CD8-positive, alpha-beta T cell (primary cell): ENCODE measurements at regions of chr1 and their contacts with region 1.

Region 1: GRCh38 chr1:91924146-91924545 is 25.1 kb upstream of the BRDT start:
- DNase-seq: no peak
- ATAC-seq: no peak
- H3K4me3 ChIP-seq: no peak overlapping the region
- H3K4me3 Mint-ChIP-seq: no peak overlapping the region
- H3K27ac ChIP-seq: no peak overlapping the region
- H3K27ac Mint-ChIP-seq: no peak overlapping the region
- H3K4me1 ChIP-seq: no peaks in the 10 kb centered on the region
- H3K4me1 Mint-ChIP-seq: no peaks in the 10 kb centered on the region
- H3K27me3 ChIP-seq: no peaks in the 10 kb centered on the region
- H3K27me3 Mint-ChIP-seq: no peaks in the 10 kb centered on the region
- CTCF ChIP-seq: no peak

Region 2: GRCh38 chr1:91404151-91405012 is 519.8 kb before region 1 on chr1 and contains the start of gene HFM1:
- CTCF ChIA-PET with region 1: interaction called, 3 read pairs
- POLR2A ChIA-PET with region 1: no interaction called
- intact Hi-C with region 1: loop called (anchors 1 to 5 kb)
- DNase-seq: peak; percentile 21 to 83 (median 61)
- ATAC-seq: peak; percentile 99
- H3K4me3 ChIP-seq: peak within 1 kb of the TSS; percentile 41 to 54
- H3K4me3 Mint-ChIP-seq: peak within 1 kb of the TSS; percentile 80
- H3K27ac ChIP-seq: no peak within 1 kb of the TSS
- H3K27ac Mint-ChIP-seq: peak within 1 kb of the TSS; percentile 66
- H3K4me1 ChIP-seq: peaks cover 7% of the 10 kb centered on the region
- H3K4me1 Mint-ChIP-seq: peaks cover 11% of the 10 kb centered on the region
- H3K27me3 ChIP-seq: no peaks in the 10 kb centered on the region
- H3K27me3 Mint-ChIP-seq: peaks cover 34% of the 10 kb centered on the region
- CTCF ChIP-seq: no peak
- total RNA-seq, gene HFM1: not detected

Region 3: GRCh38 chr1:91617285-91617765 is 306.8 kb before region 1 on chr1:
- CTCF ChIA-PET with region 1: interaction called, 3 read pairs
- POLR2A ChIA-PET with region 1: no interaction called
- intact Hi-C with region 1: loop called (anchors 5 to 10 kb)
- DNase-seq: peak in 3 of 9 experiments; percentile 12 to 35 (median 31)
- ATAC-seq: no peak
- H3K4me3 ChIP-seq: no peak overlapping the region
- H3K4me3 Mint-ChIP-seq: no peak overlapping the region
- H3K27ac ChIP-seq: no peak overlapping the region
- H3K27ac Mint-ChIP-seq: no peak overlapping the region
- H3K4me1 ChIP-seq: no peaks in the 10 kb centered on the region
- H3K4me1 Mint-ChIP-seq: no peaks in the 10 kb centered on the region
- H3K27me3 ChIP-seq: no peaks in the 10 kb centered on the region
- H3K27me3 Mint-ChIP-seq: no peaks in the 10 kb centered on the region
- CTCF ChIP-seq: no peak

Region 4: DNA sequence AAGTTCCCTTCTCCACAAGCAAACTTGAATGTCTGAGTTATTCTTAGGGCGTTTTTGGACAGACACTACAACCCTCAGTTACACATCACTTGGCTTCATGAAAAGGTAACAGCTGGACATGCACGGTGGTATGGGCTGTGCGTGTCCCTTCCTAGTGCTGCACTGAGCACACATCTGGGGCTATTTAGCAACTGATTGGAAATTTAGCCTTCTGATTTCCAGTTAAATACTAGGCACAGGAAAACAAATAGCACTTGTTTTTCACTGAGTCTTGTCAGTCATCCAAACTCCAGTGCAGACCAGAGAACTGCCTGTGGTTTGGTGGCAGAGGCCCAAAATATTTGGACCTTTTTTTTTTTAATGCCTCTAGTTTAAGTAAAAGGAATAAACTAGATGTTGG is 172.9 kb before region 1 on chr1:
- CTCF ChIA-PET with region 1: no interaction called
- POLR2A ChIA-PET with region 1: no interaction called
- intact Hi-C with region 1: no loop called
- DNase-seq: no peak
- ATAC-seq: no peak
- H3K4me3 ChIP-seq: no peak overlapping the region
- H3K4me3 Mint-ChIP-seq: no peak overlapping the region
- H3K27ac ChIP-seq: no peak overlapping the region
- H3K27ac Mint-ChIP-seq: no peak overlapping the region
- H3K4me1 ChIP-seq: no peaks in the 10 kb centered on the region
- H3K4me1 Mint-ChIP-seq: peaks cover 21% of the 10 kb centered on the region
- H3K27me3 ChIP-seq: no peaks in the 10 kb centered on the region
- H3K27me3 Mint-ChIP-seq: no peaks in the 10 kb centered on the region
- CTCF ChIP-seq: no peak

Region 5: GRCh38 chr1:91900538-91900937 is 23.6 kb before region 1 on chr1:
- CTCF ChIA-PET with region 1: no interaction called
- POLR2A ChIA-PET with region 1: no interaction called
- intact Hi-C with region 1: no loop called
- DNase-seq: no peak
- ATAC-seq: no peak
- H3K4me3 ChIP-seq: no peak overlapping the region
- H3K4me3 Mint-ChIP-seq: no peak overlapping the region
- H3K27ac ChIP-seq: no peak overlapping the region
- H3K27ac Mint-ChIP-seq: no peak overlapping the region
- H3K4me1 ChIP-seq: no peaks in the 10 kb centered on the region
- H3K4me1 Mint-ChIP-seq: peaks cover 11% of the 10 kb centered on the region
- H3K27me3 ChIP-seq: no peaks in the 10 kb centered on the region
- H3K27me3 Mint-ChIP-seq: peaks cover 2% of the 10 kb centered on the region
- CTCF ChIP-seq: no peak

Region 6: GRCh38 chr1:92134331-92134730 is 210.2 kb after region 1 on chr1:
- CTCF ChIA-PET with region 1: no interaction called
- POLR2A ChIA-PET with region 1: no interaction called
- intact Hi-C with region 1: no loop called
- DNase-seq: no peak
- ATAC-seq: no peak
- H3K4me3 ChIP-seq: no peak overlapping the region
- H3K4me3 Mint-ChIP-seq: no peak overlapping the region
- H3K27ac ChIP-seq: no peak overlapping the region
- H3K27ac Mint-ChIP-seq: no peak overlapping the region
- H3K4me1 ChIP-seq: no peaks in the 10 kb centered on the region
- H3K4me1 Mint-ChIP-seq: no peaks in the 10 kb centered on the region
- H3K27me3 ChIP-seq: no peaks in the 10 kb centered on the region
- H3K27me3 Mint-ChIP-seq: no peaks in the 10 kb centered on the region
- CTCF ChIP-seq: no peak

Region 7: GRCh38 chr1:92476071-92476631 is 552.0 kb after region 1 on chr1:
- CTCF ChIA-PET with region 1: no interaction called
- POLR2A ChIA-PET with region 1: no interaction called
- intact Hi-C with region 1: no loop called
- DNase-seq: peak; percentile 15 to 93 (median 64)
- ATAC-seq: peak; percentile 90
- H3K4me3 ChIP-seq: no peak overlapping the region
- H3K4me3 Mint-ChIP-seq: peak overlapping the region; percentile 26
- H3K27ac ChIP-seq: peak overlapping the region in 1 of 2 experiments; percentile 70
- H3K27ac Mint-ChIP-seq: peak overlapping the region; percentile 81
- H3K4me1 ChIP-seq: peaks cover 41% of the 10 kb centered on the region
- H3K4me1 Mint-ChIP-seq: peaks cover 64% of the 10 kb centered on the region
- H3K27me3 ChIP-seq: no peaks in the 10 kb centered on the region
- H3K27me3 Mint-ChIP-seq: no peaks in the 10 kb centered on the region
- CTCF ChIP-seq: no peak